HAP-1 (cell line): ENCODE measurements at regions of chr1 and their contacts with region 1.

Region 1: GRCh38 chr1:51058858-51059257 is 43.2 kb upstream of the C1orf185 start:
- DNase-seq: peak in 1 of 2 experiments; percentile 28
- H3K4me3 ChIP-seq: no peak overlapping the region
- H3K4me1 ChIP-seq: no peaks in the 10 kb centered on the region
- H3K27me3 ChIP-seq: no peaks in the 10 kb centered on the region

Region 2: GRCh38 chr1:50959913-50960844 is 98.7 kb before region 1 on chr1 and contains the start of gene FAF1:
- in situ Hi-C with region 1: no loop called
- DNase-seq: peak; percentile 96 to 97
- H3K4me3 ChIP-seq: peak within 1 kb of the TSS; percentile 60
- H3K4me1 ChIP-seq: peaks cover 10% of the 10 kb centered on the region
- H3K27me3 ChIP-seq: no peaks in the 10 kb centered on the region

Region 3: DNA sequence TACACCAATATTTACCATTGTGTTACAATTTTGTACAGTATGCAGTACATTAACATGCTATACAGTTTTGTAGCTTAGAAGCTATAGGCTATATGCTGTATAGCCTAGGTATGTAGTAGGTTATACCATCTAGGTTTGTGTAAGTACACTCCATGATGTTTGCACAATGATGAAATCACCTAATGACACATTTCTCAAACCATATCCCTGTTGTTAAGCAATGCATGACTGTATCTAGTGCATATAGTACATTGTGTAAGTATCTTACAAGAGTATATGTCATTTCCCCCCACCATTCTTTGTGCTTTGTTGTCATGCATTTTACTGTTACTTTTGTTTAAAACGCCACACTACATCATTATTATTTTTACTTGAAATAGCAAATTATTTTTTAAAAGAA is 111.5 kb after region 1 on chr1:
- in situ Hi-C with region 1: loop called (anchors 25 kb)
- DNase-seq: no peak
- H3K4me3 ChIP-seq: no peak overlapping the region
- H3K4me1 ChIP-seq: no peaks in the 10 kb centered on the region
- H3K27me3 ChIP-seq: peaks cover 3% of the 10 kb centered on the region